Activated CD8-positive, alpha-beta memory T cell treated with anti-CD3 and anti-CD28 coated beads, Interleukin-2, amount 10 ng/mL, durations not matched to agents 7 days and 5 days (primary cell): ENCODE measurements at regions of chrX and their contacts with region 1.

Region 1: DNA sequence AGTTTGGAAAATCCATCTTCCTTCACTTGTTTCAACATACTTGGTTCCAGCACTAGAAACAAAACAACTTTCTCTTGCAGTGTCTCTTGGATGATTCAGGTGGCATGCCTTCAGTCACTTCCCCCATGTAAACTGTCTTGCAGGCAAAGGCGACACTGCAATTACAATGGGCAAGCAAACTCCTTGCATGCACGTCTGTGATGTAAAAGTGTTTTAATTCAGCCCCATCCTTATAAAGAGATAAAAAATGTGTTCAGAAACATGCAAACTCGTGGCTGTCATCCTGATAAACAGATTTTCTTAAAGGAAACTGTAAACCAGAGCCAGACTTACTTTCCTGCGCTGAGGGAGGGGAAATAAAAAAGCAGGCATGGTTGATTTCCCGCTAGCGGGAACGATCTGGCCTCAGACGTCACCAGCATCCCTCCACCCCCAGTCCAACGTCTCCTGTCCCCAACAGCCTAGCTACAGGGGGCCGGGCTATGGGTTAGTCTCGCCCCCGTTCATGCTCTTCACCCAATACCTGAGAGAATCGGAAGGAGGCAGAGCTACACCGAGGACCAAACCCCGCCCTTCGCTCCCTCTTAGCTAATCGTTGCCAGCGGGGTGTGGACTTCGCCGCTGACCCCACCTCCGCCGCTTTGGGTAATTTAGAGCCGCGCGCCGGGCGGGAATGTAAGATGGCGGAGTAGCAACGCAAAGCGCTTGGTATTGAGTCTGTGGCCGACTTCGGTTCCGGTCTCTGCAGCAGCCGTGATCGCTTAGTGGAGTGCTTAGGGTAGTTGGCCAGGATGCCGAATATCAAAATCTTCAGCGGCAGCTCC is at the start of gene PRPS1:
- DNase-seq: peak; percentile 95
- ATAC-seq: peak; percentile 99
- H3K4me3 Mint-ChIP-seq: peak within 1 kb of the TSS; percentile 80
- H3K27ac Mint-ChIP-seq: peak within 1 kb of the TSS; percentile 93
- H3K4me1 Mint-ChIP-seq: peaks cover 27% of the 10 kb centered on the region
- H3K27me3 Mint-ChIP-seq: no peaks in the 10 kb centered on the region
- total RNA-seq, gene PRPS1: 68.3 to 75.7 TPM

Region 2: DNA sequence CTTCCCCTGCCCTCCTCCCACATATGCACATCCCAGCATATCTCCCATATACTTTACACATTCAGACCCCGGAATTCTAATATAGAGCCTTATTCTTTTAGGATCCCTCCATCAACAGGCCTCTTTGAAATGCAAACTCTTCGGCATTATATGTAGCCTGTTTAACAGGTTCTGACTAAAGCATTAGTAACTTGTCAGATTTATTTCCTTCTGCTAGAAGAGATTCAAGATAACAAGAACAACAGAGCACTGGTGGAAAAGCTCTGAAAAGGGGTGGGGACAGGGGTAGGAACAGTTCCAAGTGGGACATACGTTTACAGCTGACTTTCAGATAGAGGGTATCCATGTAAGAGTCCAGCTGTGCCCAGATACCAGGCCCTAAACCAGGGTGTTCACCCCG is 31.4 kb before region 1 on chrX:
- CTCF ChIA-PET with region 1: no interaction called
- DNase-seq: no peak
- ATAC-seq: no peak
- H3K4me3 Mint-ChIP-seq: no peak overlapping the region
- H3K27ac Mint-ChIP-seq: no peak overlapping the region
- H3K4me1 Mint-ChIP-seq: no peaks in the 10 kb centered on the region
- H3K27me3 Mint-ChIP-seq: peaks cover 3% of the 10 kb centered on the region

Region 3: GRCh38 chrX:107646735-107647134 is 18.7 kb after region 1 on chrX:
- CTCF ChIA-PET with region 1: interaction called, 13 read pairs
- DNase-seq: no peak
- ATAC-seq: no peak
- H3K4me3 Mint-ChIP-seq: no peak overlapping the region
- H3K27ac Mint-ChIP-seq: no peak overlapping the region
- H3K4me1 Mint-ChIP-seq: peaks cover 2% of the 10 kb centered on the region
- H3K27me3 Mint-ChIP-seq: no peaks in the 10 kb centered on the region